GM18951 (cell line): ENCODE measurements at regions of chr12 and their contacts with region 1.

Region 1: GRCh38 chr12:25436203-25437030 is 116.7 kb downstream of the LMNTD1 start:
- POLR2A ChIP-seq: no peak

Region 2: DNA sequence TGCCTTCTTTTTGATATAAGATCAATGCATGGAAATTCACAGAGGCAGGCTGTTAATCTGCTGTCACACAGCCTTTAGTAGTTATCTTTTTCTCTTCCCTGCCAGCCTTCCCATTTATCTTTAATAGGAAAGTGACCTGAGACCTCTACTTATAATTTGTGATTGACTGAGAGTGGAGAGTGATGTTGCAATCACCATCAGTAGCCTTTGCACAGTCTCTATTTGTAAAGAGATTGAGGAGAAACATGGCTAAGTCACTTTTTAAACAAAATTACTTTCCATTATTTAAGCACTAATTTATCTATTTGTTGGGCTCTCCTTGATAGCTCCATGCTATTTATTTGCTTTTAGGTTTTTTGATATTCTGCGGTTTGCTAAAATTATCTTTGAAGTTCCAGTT is 96.7 kb after region 1 on chr12:
- in situ Hi-C with region 1: no loop called
- POLR2A ChIP-seq: no peak

Region 3: DNA sequence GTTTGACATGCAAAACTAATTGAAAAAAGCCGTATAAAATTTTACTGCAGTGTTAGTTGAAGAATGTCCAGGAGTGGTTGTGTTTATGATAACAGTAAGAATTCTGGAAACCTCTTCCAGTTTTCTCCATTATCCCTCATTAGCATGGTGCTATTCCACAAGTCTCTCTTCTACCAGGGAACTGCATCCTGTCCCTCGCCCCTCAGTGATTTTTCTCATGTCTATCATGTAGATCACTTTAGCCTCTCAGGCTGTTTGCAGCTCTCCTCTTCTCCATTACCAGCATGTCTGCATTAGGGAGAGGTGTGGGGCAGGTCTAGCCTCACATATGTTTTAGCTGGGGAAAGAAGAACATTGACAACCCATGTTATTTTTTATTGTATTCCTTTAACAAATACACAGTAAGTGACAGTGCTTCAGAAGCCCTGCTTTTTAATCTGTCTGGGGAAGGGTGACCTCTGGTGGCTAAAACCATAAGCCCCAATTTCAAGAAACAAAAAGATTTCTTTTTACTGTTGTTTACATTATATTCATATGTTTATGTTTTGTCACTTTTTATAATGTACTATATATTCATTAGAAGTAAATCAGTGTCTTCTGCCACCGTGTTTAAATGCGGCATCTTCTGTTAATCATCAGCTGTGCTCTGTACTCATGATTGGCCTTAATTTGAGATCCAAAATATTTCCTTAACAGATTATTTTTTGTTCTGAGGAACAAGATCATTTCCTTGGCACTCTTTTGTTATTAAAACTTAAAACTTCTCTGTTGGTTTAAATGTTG is 592.7 kb after region 1 on chr12:
- in situ Hi-C with region 1: loop called (anchors 10 kb)
- POLR2A ChIP-seq: no peak